ENCODE measurements at regions of chr11 and their contacts with region 1.

Region 1: DNA sequence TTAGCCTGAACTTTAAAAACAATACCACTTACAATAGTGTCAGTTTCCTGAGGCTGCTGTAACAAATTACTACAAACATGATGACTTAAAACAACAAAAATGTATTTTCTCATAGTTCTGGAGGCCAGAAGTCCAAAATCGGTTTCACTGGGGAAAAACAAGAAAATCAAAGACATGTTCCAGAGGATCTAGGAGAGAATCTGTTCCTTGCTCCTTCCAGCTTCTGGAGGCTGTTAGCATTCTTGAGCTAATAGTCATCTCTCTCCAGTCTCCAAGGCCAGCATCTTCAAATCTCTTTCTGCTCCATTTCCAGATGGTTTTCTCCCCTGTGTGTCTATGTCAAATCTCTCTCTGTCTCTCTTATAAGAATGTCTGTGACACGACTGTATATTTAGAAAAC is 67.6 kb upstream of the TEAD1 start:
- DNase-seq: no peak
- H3K4me3 ChIP-seq: no peak overlapping the region
- H3K27ac ChIP-seq: no peak overlapping the region
- H3K4me1 ChIP-seq: no peaks in the 10 kb centered on the region
- H3K27me3 ChIP-seq: no peaks in the 10 kb centered on the region
- CTCF ChIP-seq: no peak
- POLR2A ChIP-seq: no peak

Region 2: DNA sequence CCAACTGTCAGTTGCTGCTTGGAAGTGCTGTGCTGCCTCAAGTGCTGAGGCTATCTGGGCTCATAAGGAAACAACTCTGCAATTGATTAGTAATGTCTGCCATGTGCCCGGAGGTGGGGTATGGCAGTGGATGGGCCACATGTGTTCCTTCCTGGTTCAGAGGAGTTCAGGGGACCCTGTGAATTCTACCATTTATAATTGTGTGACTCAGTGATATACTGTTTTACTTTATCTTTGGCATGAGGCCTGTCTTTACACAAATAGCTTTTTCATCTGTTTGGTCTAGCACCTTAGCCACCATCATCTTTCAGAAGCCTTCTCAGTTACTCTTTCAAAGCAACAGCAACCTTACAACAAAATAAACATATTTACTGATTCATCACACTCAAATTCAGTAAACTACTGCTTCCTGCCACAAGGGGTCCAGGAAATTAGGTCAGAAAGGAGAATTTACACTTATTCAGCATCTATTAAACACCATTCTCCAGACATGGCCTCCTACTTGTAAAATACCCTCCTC is 619.0 kb before region 1 on chr11:
- intact Hi-C with region 1: no loop called
- DNase-seq: peak in 1 of 7 donors; percentile 7
- H3K4me3 ChIP-seq: no peak overlapping the region
- H3K27ac ChIP-seq: peak overlapping the region in 2 of 5 donors; percentile 4 to 71
- H3K4me1 ChIP-seq: peaks cover 0 to 14% of the 10 kb centered on the region in 2 donors
- H3K27me3 ChIP-seq: no peaks in the 10 kb centered on the region
- CTCF ChIP-seq: peak in 5 of 6 experiments; percentile 20 to 50 (median 39)
- POLR2A ChIP-seq: no peak

Region 3: GRCh38 chr11:12224537-12224893 is 382.1 kb before region 1 on chr11:
- intact Hi-C with region 1: no loop called
- DNase-seq: peak; percentile 32 to 85 (median 74)
- H3K4me3 ChIP-seq: no peak overlapping the region
- H3K27ac ChIP-seq: peak overlapping the region in 1 of 5 donors; percentile 68
- H3K4me1 ChIP-seq: no peaks in the 10 kb centered on the region
- H3K27me3 ChIP-seq: no peaks in the 10 kb centered on the region
- CTCF ChIP-seq: no peak
- POLR2A ChIP-seq: no peak

Region 4: DNA sequence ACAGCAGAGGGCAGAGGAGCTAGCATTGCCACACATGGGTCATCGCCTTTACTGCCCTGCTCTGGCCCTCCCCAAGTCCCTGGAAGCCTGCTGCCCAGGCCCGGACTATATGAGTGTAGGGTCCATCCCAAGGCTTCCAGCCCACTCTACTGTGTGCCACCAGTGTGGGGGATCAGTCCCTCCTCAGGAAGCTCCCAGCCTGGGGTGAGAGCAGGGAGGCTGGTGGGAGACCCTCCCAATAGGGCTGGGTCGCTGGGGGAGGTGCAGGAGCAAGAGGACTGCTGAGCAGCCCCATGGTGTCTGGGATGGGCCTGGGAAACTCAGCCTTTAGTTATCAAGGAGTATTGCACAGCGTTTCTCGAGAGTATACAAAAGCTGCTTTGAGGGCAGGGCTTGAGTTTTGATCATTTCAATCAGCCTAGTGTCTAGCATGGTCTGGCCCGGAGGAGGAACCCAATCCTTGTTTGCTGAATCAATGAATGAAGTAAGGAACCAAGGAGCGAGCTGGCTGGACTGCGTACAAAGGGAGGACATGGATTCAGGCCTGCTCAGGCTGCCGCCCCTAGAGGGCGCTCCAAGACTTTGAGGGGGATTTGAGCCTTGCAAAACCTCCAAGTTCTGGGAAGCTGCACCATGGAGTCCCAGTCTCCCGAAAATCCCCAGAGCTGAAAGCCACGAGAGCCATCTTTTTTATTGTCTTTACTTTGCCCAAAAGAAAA is 318.2 kb before region 1 on chr11:
- intact Hi-C with region 1: loop called in 1 of 2 experiments (anchors 5 kb)
- DNase-seq: peak; percentile 72 to 89 (median 74)
- H3K4me3 ChIP-seq: no peak overlapping the region
- H3K27ac ChIP-seq: peak overlapping the region in 4 of 5 donors; percentile 55 to 92 (median 69)
- H3K4me1 ChIP-seq: peaks cover 8 to 12% of the 10 kb centered on the region in 2 donors
- H3K27me3 ChIP-seq: no peaks in the 10 kb centered on the region
- CTCF ChIP-seq: peak; percentile 43 to 75 (median 68)
- POLR2A ChIP-seq: no peak